Mammary epithelial cell (primary cell): ENCODE measurements at regions of chr2 and their contacts with region 1.

Region 1: DNA sequence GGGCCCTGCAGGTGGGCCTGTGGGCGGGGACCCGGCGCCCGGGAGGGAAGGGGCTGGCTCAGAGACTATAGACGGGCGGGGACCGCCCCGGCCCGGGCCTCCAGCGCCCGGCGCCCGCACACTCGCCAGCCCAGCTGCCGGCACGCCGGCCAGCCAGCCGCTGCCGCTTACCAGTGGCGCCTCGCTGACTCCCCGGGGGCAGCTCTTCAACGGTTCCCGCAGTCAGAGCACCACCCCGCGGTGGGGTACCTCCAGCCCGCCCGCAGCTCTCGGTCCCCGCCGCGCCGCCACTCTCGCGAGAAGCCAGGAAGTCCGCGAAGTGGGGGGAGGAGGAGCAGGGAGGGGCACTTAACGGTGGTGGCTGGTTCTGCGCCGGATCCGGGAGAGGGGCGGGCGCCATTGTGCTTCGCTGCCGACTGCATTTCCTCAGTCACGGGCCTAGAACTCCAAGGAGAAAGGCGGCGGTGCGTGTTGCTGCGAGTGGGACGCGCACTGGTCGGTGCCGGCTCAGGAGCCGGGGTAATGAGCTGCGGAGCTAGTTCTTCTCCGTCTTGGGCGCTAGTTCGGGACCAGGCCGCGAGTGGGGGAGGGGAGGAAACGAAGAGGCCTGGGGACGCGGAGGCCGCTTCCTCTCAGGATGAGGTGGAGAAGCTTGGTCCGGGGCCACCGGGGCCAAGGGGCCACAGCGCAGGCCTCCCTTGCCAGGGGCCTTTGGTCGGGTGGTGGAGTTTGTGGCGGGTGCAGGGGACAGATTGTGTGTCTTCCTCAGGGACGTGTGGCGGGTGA is at the start of gene MARCHF7:
- DNase-seq: peak; percentile 97
- H3K4me3 ChIP-seq: peak within 1 kb of the TSS; percentile 70 to 87 (median 85)
- H3K27ac ChIP-seq: peak within 1 kb of the TSS; percentile 88
- H3K4me1 ChIP-seq: peaks cover 24% of the 10 kb centered on the region
- H3K27me3 ChIP-seq: no peaks in the 10 kb centered on the region
- CTCF ChIP-seq: peak; percentile 60 to 82
- total RNA-seq, gene MARCHF7: 84.3 to 121 TPM

Region 2: DNA sequence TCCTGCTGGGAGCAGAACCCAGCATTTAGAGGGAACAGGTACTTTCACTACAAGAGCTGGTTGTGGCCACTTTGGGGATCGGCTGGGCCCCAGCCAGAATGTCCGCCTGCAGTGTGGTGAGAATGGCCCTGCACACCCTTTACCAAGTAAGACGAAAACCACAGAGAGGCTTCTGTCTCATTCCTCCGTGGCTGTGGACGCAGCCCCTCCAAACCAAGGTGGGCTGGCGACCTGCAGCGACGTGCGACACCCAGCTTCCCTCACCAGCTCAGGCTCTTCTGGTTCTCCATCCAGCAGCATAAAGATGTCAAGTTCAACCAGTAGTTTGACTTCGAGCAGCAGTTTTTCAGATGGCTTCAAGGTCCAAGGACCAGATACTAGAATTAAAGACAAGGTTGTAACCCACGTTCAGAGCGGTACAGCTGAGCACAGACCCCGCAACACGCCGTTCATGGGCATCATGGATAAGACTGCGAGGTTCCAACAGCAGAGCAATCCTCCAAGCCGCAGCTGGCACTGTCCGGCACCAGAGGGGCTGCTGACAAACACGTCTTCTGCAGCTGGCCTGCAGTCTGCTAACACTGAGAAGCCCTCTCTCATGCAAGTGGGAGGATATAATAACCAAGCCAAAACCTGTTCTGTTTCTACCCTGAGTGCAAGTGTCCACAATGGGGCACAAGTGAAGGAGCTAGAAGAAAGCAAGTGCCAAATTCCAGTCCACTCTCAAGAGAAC is 482.0 kb before region 1 on chr2:
- CTCF ChIA-PET with region 1: no interaction called
- dilution Hi-C with region 1: no loop called
- in situ Hi-C with region 1: no loop called
- intact Hi-C with region 1: loop called (anchors 10 kb)
- DNase-seq: no peak
- H3K4me3 ChIP-seq: no peak overlapping the region
- H3K27ac ChIP-seq: no peak overlapping the region
- H3K4me1 ChIP-seq: no peaks in the 10 kb centered on the region
- H3K27me3 ChIP-seq: no peaks in the 10 kb centered on the region
- CTCF ChIP-seq: no peak

Region 3: DNA sequence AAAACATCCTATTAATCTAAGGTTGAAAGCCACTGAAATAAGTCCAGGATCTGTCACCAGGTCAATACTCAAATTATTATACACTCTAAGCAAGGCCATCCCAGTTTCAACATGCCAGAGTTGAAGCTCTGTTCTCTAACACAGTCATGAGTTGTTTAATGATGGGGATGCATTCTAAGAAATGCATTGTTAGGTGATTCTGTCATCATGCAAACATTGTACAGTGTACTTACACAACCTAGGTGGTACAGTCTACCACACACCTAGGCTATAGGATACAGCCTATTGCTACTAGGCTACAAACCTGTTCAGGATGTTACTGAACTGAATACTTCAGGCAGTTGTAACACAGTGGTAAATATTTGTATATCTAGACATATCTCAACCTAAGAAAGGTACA is 258.2 kb before region 1 on chr2:
- CTCF ChIA-PET with region 1: no interaction called
- dilution Hi-C with region 1: no loop called
- in situ Hi-C with region 1: no loop called
- intact Hi-C with region 1: loop called (anchors 5 kb)
- DNase-seq: peak; percentile 84
- H3K4me3 ChIP-seq: no peak overlapping the region
- H3K27ac ChIP-seq: no peak overlapping the region
- H3K4me1 ChIP-seq: no peaks in the 10 kb centered on the region
- H3K27me3 ChIP-seq: no peaks in the 10 kb centered on the region
- CTCF ChIP-seq: no peak

Region 4: GRCh38 chr2:159557451-159558034 is 154.8 kb before region 1 on chr2:
- CTCF ChIA-PET with region 1: interaction called, 8 read pairs
- dilution Hi-C with region 1: no loop called
- in situ Hi-C with region 1: loop called in 1 of 2 experiments (anchors 10 kb)
- intact Hi-C with region 1: loop called (anchors 1 kb)
- DNase-seq: peak; percentile 40
- H3K4me3 ChIP-seq: no peak overlapping the region
- H3K27ac ChIP-seq: no peak overlapping the region
- H3K4me1 ChIP-seq: no peaks in the 10 kb centered on the region
- H3K27me3 ChIP-seq: no peaks in the 10 kb centered on the region
- CTCF ChIP-seq: peak; percentile 57 to 80

Region 5: DNA sequence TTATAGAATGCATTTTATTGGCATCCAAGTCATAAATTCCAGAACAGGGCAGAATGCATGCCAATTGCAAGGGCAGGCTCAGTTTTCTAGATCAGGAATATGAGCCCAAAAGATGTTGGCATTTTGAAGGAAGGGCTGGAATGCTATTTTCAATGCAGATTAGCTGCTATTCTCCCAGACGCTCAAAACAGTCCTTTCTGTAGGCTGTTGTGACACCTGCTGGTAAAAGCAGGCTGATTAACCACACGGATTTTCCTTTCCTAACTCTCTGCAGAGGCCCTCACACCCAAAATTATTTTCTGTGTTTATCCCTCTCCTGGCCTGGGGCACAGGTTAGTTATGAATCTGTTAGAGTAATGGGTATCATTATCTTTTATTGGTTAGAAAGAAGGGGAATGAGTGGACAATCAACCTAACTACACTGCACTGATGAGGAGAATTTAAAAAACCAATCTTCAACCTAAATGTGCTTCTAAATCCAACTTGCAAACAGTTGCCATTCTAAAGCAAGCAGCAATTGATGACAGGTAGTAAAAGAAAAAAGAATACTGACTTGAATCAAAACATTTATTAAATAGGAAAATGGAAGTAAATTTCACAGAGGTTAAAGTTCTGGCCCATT is 256.1 kb after region 1 on chr2:
- CTCF ChIA-PET with region 1: no interaction called
- dilution Hi-C with region 1: no loop called
- in situ Hi-C with region 1: no loop called
- intact Hi-C with region 1: loop called (anchors 5 kb)
- DNase-seq: peak; percentile 39
- H3K4me3 ChIP-seq: no peak overlapping the region
- H3K27ac ChIP-seq: no peak overlapping the region
- H3K4me1 ChIP-seq: peaks cover 9% of the 10 kb centered on the region
- H3K27me3 ChIP-seq: no peaks in the 10 kb centered on the region
- CTCF ChIP-seq: peak; percentile 51 to 59

Region 6: DNA sequence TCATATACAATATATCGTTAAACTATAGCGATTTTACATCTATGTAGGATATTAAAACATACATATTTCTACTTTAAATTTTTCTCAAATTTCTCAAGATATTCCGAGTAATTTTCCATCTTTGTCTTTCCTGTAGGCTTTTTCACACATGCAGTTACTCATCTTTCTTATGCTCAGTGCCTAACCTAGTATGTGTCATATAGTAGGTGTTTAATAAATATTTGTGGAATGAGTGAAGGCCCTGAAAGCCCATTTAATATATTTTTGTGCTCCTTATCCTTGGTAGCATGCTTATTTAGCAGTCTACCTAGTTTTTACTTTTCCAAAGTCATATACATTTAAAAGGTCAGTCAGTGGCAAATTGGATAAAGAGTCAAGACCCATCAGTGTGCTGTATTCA is 420.4 kb after region 1 on chr2:
- CTCF ChIA-PET with region 1: no interaction called
- dilution Hi-C with region 1: no loop called
- in situ Hi-C with region 1: no loop called
- intact Hi-C with region 1: no loop called
- DNase-seq: peak; percentile 39
- H3K4me3 ChIP-seq: no peak overlapping the region
- H3K27ac ChIP-seq: peak overlapping the region; percentile 3
- H3K4me1 ChIP-seq: no peaks in the 10 kb centered on the region
- H3K27me3 ChIP-seq: no peaks in the 10 kb centered on the region
- CTCF ChIP-seq: no peak